ENCODE measurements at regions of chr2 and their contacts with region 1.

Region 1: GRCh38 chr2:38648107-38648761 is 17.7 kb upstream of the GALM start:
- DNase-seq: peak; percentile 40
- ATAC-seq: peak; percentile 51
- H3K4me3 ChIP-seq: peak overlapping the region in 1 of 3 experiments; percentile 20; a peak in 3 of 6 replicates
- H3K27ac ChIP-seq: no peak overlapping the region
- H3K4me1 ChIP-seq: peaks cover 49% of the 10 kb centered on the region
- H3K27me3 ChIP-seq: no peaks in the 10 kb centered on the region; a peak in 2 of 5 replicates
- CTCF ChIP-seq: no peak
- EP300 ChIP-seq: no peak
- POLR2A ChIP-seq: no peak
- RAD21 ChIP-seq: no peak

Region 2: DNA sequence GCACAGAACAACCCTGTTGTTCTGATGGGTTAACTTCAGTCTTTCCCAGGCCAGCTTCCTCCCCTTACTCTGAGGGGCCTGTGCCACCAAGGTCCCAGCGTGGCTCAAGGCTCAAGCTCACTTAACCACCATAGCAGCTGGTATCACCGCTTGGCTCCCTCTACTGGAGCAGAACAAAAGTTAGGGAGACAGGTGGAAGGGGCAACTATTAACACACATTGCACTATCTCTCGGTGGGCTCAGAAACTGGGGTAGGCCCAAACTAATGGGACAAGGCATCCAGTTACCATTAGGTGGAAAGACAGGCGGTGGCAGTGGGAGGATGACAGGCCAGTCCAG is 182.5 kb before region 1 on chr2:
- CTCF ChIA-PET with region 1: no interaction called
- POLR2A ChIA-PET with region 1: no interaction called
- in situ Hi-C with region 1: no loop called
- intact Hi-C with region 1: no loop called
- DNase-seq: peak; percentile 75
- ATAC-seq: peak; percentile 91
- H3K4me3 ChIP-seq: no peak overlapping the region
- H3K27ac ChIP-seq: no peak overlapping the region
- H3K4me1 ChIP-seq: peaks cover 49% of the 10 kb centered on the region
- H3K27me3 ChIP-seq: no peaks in the 10 kb centered on the region; a peak in 2 of 5 replicates
- CTCF ChIP-seq: peak; percentile 92
- EP300 ChIP-seq: no peak
- POLR2A ChIP-seq: no peak
- RAD21 ChIP-seq: peak; percentile 88

Region 3: DNA sequence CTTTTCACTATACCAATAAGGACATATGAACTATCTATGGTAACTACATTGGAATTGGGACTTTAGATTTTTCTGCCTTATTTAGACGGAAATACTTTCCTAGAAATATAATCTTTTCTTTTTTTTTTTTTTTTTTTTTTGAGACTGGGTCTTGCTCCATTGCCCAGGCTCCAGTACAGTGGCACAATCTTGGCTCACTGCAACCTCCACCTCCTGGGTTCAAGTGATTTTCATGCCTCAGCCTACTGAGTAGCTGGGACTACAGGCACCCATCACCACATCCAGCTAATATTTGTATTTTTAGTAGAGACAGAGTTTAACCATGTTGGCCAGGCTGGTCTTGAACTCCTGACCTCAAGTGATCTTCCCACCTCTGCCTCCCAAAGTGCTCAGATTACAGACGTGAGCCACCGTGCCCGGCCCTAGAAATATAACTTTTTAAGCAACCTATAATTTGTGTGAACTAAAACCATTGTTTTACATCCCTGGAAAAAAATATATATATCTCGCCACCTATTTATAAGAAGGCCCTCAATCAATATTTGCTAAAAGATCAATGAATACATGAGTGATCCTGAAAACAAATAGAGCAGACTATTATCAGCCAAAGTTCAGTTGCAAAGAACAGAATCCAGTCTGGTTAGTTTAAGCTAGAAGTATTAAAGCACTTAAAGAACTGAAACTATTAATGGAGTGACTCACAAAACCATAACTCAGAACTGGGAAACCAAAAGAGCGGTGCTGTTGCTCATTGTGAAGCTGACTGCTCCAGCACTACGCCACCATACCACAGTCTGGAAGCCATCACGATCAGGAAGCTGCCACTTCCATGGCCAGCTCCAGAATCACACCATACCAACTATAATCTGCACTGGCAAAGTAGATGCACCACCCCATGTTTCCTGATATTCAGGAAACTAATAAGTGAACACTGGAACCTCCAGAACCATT is 37.1 kb before region 1 on chr2:
- CTCF ChIA-PET with region 1: no interaction called
- POLR2A ChIA-PET with region 1: no interaction called
- in situ Hi-C with region 1: no loop called
- intact Hi-C with region 1: loop called (anchors 5 kb)
- DNase-seq: peak; percentile 95
- ATAC-seq: peak; percentile 93
- H3K4me3 ChIP-seq: peak overlapping the region in 1 of 3 experiments; percentile 17; a peak in 1 of 6 replicates
- H3K27ac ChIP-seq: peak overlapping the region; percentile 73
- H3K4me1 ChIP-seq: peaks cover 80% of the 10 kb centered on the region
- H3K27me3 ChIP-seq: no peaks in the 10 kb centered on the region
- CTCF ChIP-seq: 0 out of 2 replicates have a peak, but pooled peaks have one; percentile 5
- EP300 ChIP-seq: peak; percentile 35 to 95; a peak in 2 of 4 replicates
- POLR2A ChIP-seq: peak in 1 of 2 experiments; percentile 33; a peak in 1 of 4 replicates
- RAD21 ChIP-seq: no peak

Region 4: GRCh38 chr2:38634684-38635083 is 13.6 kb before region 1 on chr2:
- CTCF ChIA-PET with region 1: no interaction called
- POLR2A ChIA-PET with region 1: no interaction called
- in situ Hi-C with region 1: no loop called
- intact Hi-C with region 1: no loop called
- DNase-seq: no peak
- ATAC-seq: no peak
- H3K4me3 ChIP-seq: no peak overlapping the region
- H3K27ac ChIP-seq: no peak overlapping the region
- H3K4me1 ChIP-seq: peaks cover 12% of the 10 kb centered on the region
- H3K27me3 ChIP-seq: no peaks in the 10 kb centered on the region
- CTCF ChIP-seq: no peak
- EP300 ChIP-seq: no peak
- POLR2A ChIP-seq: no peak
- RAD21 ChIP-seq: no peak

Region 5: GRCh38 chr2:38672445-38673391 is 24.5 kb after region 1 on chr2:
- CTCF ChIA-PET with region 1: no interaction called
- POLR2A ChIA-PET with region 1: no interaction called
- in situ Hi-C with region 1: no loop called
- intact Hi-C with region 1: no loop called
- DNase-seq: no peak
- ATAC-seq: no peak
- H3K4me3 ChIP-seq: no peak overlapping the region
- H3K27ac ChIP-seq: no peak overlapping the region
- H3K4me1 ChIP-seq: peaks cover 54% of the 10 kb centered on the region
- H3K27me3 ChIP-seq: no peaks in the 10 kb centered on the region
- CTCF ChIP-seq: no peak
- EP300 ChIP-seq: no peak
- POLR2A ChIP-seq: no peak
- RAD21 ChIP-seq: no peak

Measured in HepG2 (cell line).